GM12878 (cell line): ENCODE measurements at regions of chr5 and their contacts with region 1.

Region 1: DNA sequence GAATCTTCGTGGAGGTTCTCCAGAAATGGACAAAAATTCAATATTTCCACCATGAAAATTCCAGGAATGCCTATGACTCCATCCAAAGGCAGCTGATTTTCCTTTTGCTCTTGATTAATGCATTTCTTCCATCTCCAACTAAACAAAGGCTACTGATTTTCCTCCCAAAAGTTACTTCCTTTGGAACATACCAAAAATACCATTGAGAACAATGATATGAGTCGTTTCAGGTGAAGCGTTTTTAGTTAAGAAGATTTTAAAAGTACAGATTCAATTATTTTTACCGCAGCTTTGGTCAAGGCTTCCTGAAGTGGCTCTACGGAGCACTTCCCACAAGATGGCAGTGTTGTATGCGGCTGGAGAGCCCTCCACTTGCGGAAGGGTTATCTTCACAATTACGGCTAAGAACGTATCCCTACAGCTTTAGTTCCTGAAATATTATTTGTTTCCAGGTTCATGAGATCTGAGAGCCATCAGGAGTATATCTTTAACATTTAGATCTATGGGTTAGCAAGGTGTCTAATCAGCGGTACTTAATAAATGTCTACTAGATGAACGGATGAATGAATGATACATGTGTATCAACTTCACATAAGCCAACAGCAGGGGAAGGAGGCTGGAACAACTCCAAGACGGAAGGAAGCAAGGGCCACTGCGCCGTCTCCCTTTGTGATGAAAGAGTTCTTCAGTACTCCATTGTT is 35.9 kb upstream of the ARSB start:
- DNase-seq: no peak
- ATAC-seq: peak; percentile 89
- H3K4me3 ChIP-seq: no peak overlapping the region
- H3K27ac ChIP-seq: no peak overlapping the region
- H3K4me1 ChIP-seq: no peaks in the 10 kb centered on the region
- H3K27me3 ChIP-seq: no peaks in the 10 kb centered on the region; a peak in 1 of 4 replicates
- CTCF ChIP-seq: peak; percentile 68 to 83 (median 78)
- EP300 ChIP-seq: no peak
- POLR2A ChIP-seq: no peak
- RAD21 ChIP-seq: peak; percentile 67

Region 2: GRCh38 chr5:78899922-78900362 is 121.1 kb before region 1 on chr5:
- CTCF ChIA-PET with region 1: interaction called, 123 read pairs
- POLR2A ChIA-PET with region 1: no interaction called
- RAD21 ChIA-PET with region 1: interaction called, 34 read pairs
- SMC1A ChIA-PET with region 1: interaction called, 98 read pairs
- in situ Hi-C with region 1: no loop called
- intact Hi-C with region 1: loop called (anchors 2 kb)
- DNase-seq: no peak
- ATAC-seq: peak; percentile 88
- H3K4me3 ChIP-seq: no peak overlapping the region
- H3K27ac ChIP-seq: no peak overlapping the region
- H3K4me1 ChIP-seq: peaks cover 6% of the 10 kb centered on the region
- H3K27me3 ChIP-seq: no peaks in the 10 kb centered on the region
- CTCF ChIP-seq: peak; percentile 65 to 86 (median 77)
- EP300 ChIP-seq: no peak
- POLR2A ChIP-seq: no peak
- RAD21 ChIP-seq: peak; percentile 94

Region 3: GRCh38 chr5:78984439-78985115 is 36.4 kb before region 1 on chr5:
- CTCF ChIA-PET with region 1: interaction called, 61 read pairs
- POLR2A ChIA-PET with region 1: interaction called, 4 read pairs
- RAD21 ChIA-PET with region 1: interaction called, 16 read pairs
- SMC1A ChIA-PET with region 1: interaction called, 20 read pairs
- in situ Hi-C with region 1: no loop called
- intact Hi-C with region 1: loop called (anchors 5 kb)
- DNase-seq: no peak
- ATAC-seq: peak; percentile 54
- H3K4me3 ChIP-seq: peak overlapping the region; percentile 94
- H3K27ac ChIP-seq: peak overlapping the region; percentile 90
- H3K4me1 ChIP-seq: peaks cover 15% of the 10 kb centered on the region; the same call in 1 of the 2 replicates
- H3K27me3 ChIP-seq: no peaks in the 10 kb centered on the region
- CTCF ChIP-seq: 0 out of 6 replicates have a peak, but pooled peaks of 2 of the 3 experiments have one; percentile 13 to 23
- EP300 ChIP-seq: 0 out of 4 replicates have a peak, but pooled peaks of 1 of the 2 experiments have one; percentile 32
- POLR2A ChIP-seq: peak; percentile 89
- RAD21 ChIP-seq: no peak

Region 4: GRCh38 chr5:79048437-79048836 is 27.4 kb after region 1 on chr5:
- CTCF ChIA-PET with region 1: interaction called, 68 read pairs
- POLR2A ChIA-PET with region 1: no interaction called
- RAD21 ChIA-PET with region 1: interaction called, 4 read pairs
- SMC1A ChIA-PET with region 1: interaction called, 5 read pairs
- in situ Hi-C with region 1: no loop called
- intact Hi-C with region 1: no loop called
- DNase-seq: no peak
- ATAC-seq: no peak
- H3K4me3 ChIP-seq: no peak overlapping the region
- H3K27ac ChIP-seq: no peak overlapping the region
- H3K4me1 ChIP-seq: no peaks in the 10 kb centered on the region
- H3K27me3 ChIP-seq: no peaks in the 10 kb centered on the region; a peak in 2 of 4 replicates
- CTCF ChIP-seq: no peak
- EP300 ChIP-seq: no peak
- POLR2A ChIP-seq: no peak
- RAD21 ChIP-seq: no peak

Region 5: DNA sequence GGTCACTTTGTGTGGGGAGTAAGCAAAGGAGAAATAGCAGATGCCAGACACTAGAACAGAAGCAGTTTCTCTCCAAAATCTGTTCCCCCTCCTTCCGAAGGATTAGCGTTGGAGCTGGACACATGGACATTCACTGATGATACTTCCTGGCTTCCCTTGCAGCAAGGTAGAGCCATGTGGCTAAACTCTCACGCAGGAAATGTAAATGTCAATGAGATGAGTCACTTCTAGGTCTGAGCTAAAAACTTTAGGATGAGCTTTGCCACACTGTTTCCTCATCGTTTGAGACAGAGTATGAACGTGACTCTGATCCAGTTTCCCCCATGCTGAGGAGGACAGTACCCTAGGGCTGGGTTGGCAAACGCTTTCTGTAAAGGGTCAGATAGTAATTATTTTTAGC is 53.6 kb after region 1 on chr5:
- CTCF ChIA-PET with region 1: interaction called, 11 read pairs
- POLR2A ChIA-PET with region 1: no interaction called
- RAD21 ChIA-PET with region 1: interaction called, 3 read pairs
- SMC1A ChIA-PET with region 1: interaction called, 8 read pairs
- in situ Hi-C with region 1: no loop called
- intact Hi-C with region 1: no loop called
- DNase-seq: no peak
- ATAC-seq: no peak; the same call in 2 of the 3 replicates
- H3K4me3 ChIP-seq: no peak overlapping the region
- H3K27ac ChIP-seq: no peak overlapping the region
- H3K4me1 ChIP-seq: no peaks in the 10 kb centered on the region
- H3K27me3 ChIP-seq: peaks cover 1 to 3% of the 10 kb centered on the region in 2 experiments; a peak in 2 of 4 replicates
- CTCF ChIP-seq: no peak
- EP300 ChIP-seq: no peak
- POLR2A ChIP-seq: no peak
- RAD21 ChIP-seq: no peak

Region 6: DNA sequence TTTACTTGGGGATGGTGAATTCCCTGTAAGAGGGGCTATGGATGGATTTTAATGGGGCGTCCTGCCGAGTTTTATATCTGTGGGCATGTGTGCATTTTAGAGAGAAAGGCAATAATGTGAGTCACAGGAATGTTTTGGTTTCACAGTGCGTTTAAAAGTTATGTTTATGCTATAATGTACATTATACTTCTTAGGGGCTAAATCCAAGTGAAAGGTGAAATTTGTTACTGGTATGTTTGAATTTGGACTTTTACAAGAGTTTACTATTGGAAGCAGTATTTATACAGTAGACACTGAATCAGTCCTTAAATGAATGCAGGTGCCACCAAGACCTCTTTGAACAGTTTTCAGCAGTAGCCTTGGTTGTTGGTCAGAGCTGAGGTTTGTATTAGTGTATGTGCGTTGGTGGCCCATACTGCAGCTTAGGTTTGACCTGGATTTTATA is 220.5 kb after region 1 on chr5:
- CTCF ChIA-PET with region 1: interaction called, 7 read pairs
- POLR2A ChIA-PET with region 1: no interaction called
- RAD21 ChIA-PET with region 1: interaction called, 4 read pairs
- SMC1A ChIA-PET with region 1: interaction called, 10 read pairs
- in situ Hi-C with region 1: no loop called
- intact Hi-C with region 1: no loop called
- DNase-seq: no peak
- ATAC-seq: peak; percentile 24
- H3K4me3 ChIP-seq: peak overlapping the region; percentile 9; the same call in 1 of the 2 replicates
- H3K27ac ChIP-seq: peak overlapping the region; percentile 4; the same call in 1 of the 2 replicates
- H3K4me1 ChIP-seq: peaks cover 8% of the 10 kb centered on the region
- H3K27me3 ChIP-seq: no peaks in the 10 kb centered on the region
- CTCF ChIP-seq: no peak
- EP300 ChIP-seq: no peak
- POLR2A ChIP-seq: no peak
- RAD21 ChIP-seq: no peak

Region 7: GRCh38 chr5:79857714-79858409 is 836.9 kb after region 1 on chr5:
- CTCF ChIA-PET with region 1: interaction called, 4 read pairs
- POLR2A ChIA-PET with region 1: no interaction called
- RAD21 ChIA-PET with region 1: no interaction called
- SMC1A ChIA-PET with region 1: no interaction called
- in situ Hi-C with region 1: no loop called
- intact Hi-C with region 1: loop called (anchors 10 kb)
- DNase-seq: peak; percentile 23
- ATAC-seq: peak; percentile 79
- H3K4me3 ChIP-seq: no peak overlapping the region
- H3K27ac ChIP-seq: no peak overlapping the region
- H3K4me1 ChIP-seq: no peaks in the 10 kb centered on the region
- H3K27me3 ChIP-seq: peaks cover 0 to 2% of the 10 kb centered on the region in 2 experiments; a peak in 1 of 4 replicates
- CTCF ChIP-seq: peak; percentile 87 to 98 (median 97)
- EP300 ChIP-seq: no peak
- POLR2A ChIP-seq: no peak
- RAD21 ChIP-seq: peak; percentile 89